ENCODE measurements at regions of chr2 and their contacts with region 1.

Region 1: DNA sequence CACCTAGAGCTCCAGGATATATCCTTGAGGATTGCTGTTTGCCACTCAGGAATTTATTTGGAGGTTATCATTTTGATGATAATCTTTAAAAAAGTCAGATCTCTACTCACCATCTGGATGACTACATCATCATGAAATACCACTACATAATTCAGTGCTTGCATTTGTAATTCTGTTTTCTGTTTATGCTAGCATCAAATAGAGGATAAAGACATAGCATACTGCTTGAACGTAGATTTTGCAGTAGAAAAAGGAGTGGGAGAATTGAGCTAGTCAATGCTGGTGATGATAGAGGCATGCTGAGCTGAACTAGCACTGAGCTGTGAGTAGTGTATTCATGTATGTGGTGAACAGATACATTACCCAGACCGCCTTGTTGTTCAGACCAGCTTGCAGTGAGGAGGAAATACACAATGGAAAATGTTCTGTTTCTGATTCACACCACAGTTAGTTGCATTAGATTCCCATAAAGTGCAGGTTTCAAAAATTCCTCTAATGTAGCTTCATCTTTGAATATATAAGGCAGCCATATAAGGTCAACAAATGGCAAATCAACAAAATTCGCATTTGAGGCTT is 68.8 kb upstream of the CDC42EP3 start:
- DNase-seq: no peak
- ATAC-seq: no peak
- H3K4me3 ChIP-seq: no peak overlapping the region
- H3K27ac ChIP-seq: no peak overlapping the region
- H3K4me1 ChIP-seq: peaks cover 4 to 7% of the 10 kb centered on the region in 2 donors
- H3K27me3 ChIP-seq: no peaks in the 10 kb centered on the region

Region 2: DNA sequence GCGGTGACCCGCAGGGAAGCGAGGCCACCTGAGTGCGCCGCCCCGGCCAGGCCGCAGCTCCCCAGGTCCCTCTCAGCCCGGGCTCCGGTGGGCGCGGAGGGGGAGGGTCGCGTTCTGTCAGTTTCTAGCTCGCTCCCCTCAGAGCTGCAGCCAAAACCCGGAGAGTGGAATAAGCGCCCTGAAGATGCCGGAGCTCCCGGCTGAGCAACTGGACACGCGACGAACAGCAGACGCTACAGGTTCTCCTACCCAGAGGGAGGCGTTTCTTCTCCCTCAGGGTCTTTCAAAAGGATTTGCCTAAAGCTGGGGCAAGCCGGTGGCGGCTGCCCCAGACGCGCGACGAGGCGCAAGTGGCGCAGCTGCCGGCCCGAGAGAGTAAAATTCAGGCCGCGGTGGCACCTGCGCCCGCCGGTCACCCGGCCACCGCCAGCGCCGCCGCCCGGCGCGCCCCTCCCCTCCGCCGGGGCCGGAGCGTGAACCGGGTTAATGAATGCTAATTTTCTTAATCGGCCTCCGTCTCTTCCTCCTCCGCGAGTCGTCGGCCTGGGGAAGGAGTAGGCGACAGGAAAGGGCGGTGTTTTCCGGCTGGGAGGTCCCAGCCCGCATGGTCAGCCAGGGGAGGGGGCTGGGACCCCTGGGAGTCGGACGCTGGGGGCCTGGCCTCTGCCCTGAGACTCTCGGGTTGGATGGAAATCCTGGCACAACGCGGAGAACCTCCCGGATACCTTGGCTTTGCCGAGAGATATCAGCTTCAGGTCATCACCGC is 68.0 kb before region 1 on chr2:
- intact Hi-C with region 1: loop called in 1 of 2 experiments (anchors 10 kb)
- DNase-seq: peak; percentile 84 to 89
- ATAC-seq: peak; percentile 75
- H3K4me3 ChIP-seq: peak overlapping the region; percentile 82 to 97
- H3K27ac ChIP-seq: peak overlapping the region; percentile 61 to 88
- H3K4me1 ChIP-seq: peaks cover 0 to 4% of the 10 kb centered on the region in 2 donors
- H3K27me3 ChIP-seq: no peaks in the 10 kb centered on the region

Region 3: DNA sequence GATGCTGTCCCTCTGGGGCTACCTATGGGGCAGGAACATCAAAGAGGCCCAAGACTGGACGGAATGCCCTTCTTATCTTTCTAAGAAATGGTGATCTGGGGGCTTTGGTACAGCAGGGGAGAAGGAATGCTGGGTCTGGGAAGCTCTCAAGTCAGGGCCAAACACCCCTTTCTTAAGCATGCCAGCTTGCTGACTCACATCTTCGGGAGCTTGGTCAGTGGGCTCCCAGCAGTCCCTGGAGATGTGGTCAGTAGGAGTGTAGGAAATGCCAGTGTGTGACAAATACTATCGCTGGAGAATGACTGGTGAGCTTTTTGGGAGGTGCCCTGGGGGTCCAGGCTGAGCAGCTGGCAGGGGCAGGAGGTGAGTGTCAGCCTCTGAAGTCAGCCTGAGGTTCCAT is 36.2 kb after region 1 on chr2:
- intact Hi-C with region 1: loop called in 1 of 2 experiments (anchors 5 kb)
- DNase-seq: peak; percentile 77 to 80
- ATAC-seq: peak; percentile 63
- H3K4me3 ChIP-seq: no peak overlapping the region
- H3K27ac ChIP-seq: peak overlapping the region; percentile 94 to 95
- H3K4me1 ChIP-seq: peaks cover 3 to 8% of the 10 kb centered on the region in 2 donors
- H3K27me3 ChIP-seq: no peaks in the 10 kb centered on the region

Region 4: DNA sequence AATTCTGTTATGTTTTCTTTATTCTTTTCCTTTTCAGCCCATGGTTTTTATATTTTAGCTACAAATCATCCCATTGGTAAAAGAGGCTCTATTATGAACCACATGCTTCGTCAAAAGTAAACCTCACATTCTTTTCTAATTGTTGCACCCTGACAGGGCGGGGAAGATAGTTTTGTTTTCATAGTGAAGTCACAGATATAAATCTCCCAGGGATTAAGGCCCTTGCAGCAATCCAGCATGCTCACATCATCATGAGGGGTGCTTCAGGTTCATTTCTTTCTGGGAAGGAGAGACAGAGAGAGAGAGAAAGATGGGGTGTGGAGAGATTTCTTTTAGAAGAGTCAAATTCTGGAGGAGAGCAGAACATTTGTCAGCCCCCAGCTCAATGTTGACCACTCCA is 55.7 kb after region 1 on chr2:
- intact Hi-C with region 1: loop called in 1 of 2 experiments (anchors 10 kb)
- DNase-seq: no peak
- ATAC-seq: no peak
- H3K4me3 ChIP-seq: no peak overlapping the region
- H3K27ac ChIP-seq: no peak overlapping the region
- H3K4me1 ChIP-seq: peaks cover 5 to 11% of the 10 kb centered on the region in 2 donors
- H3K27me3 ChIP-seq: no peaks in the 10 kb centered on the region

Region 5: GRCh38 chr2:37869771-37870170 is 129.5 kb after region 1 on chr2:
- intact Hi-C with region 1: no loop called
- DNase-seq: no peak
- ATAC-seq: no peak
- H3K4me3 ChIP-seq: no peak overlapping the region
- H3K27ac ChIP-seq: peak overlapping the region in 1 of 2 donors; percentile 39
- H3K4me1 ChIP-seq: peaks cover 0 to 4% of the 10 kb centered on the region in 2 donors
- H3K27me3 ChIP-seq: no peaks in the 10 kb centered on the region